T-cell (primary cell): ENCODE measurements at regions of chr2 and their contacts with region 1.

Region 1: DNA sequence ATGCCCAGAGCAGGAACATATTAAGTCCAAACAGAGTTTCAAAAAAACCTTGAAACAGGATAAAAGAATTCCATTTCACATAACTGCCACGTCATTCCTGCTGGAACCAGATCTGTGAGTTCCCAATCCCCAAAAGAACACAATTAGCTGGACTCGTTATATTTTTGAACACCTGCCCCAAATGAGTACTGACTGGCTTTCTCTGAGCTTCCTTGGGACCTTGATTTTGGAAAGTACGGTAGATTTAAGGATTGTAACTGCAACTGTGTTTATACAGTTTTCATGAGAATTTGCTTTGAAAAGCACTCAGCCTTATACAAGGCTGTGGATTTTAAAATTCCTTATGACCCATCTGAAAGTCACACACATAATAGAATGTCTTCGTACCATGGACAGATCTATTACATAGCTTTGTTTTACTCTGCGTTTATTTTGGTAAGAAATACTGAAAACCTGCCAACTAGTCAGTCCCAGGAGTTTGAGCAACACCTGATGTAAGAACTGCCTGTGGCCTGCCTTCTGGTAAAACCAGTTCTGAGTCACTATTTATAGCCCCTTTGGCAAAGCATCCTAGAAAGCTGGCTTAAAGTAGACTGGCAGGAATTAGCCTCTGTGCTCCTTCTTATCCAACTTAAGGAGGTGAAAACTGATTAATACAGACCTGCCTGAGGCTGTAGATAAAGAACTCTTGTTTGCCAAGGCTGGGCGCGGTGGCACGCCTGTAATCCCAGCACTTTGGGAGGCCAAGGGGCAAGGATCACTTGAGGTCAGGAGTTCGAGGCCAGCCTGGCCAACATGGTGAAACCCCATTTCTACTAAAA is 48.1 kb downstream of the MERTK start:
- DNase-seq: no peak
- ATAC-seq: no peak
- H3K4me3 ChIP-seq: no peak overlapping the region
- H3K4me3 Mint-ChIP-seq: no peak overlapping the region
- H3K27ac ChIP-seq: no peak overlapping the region
- H3K27ac Mint-ChIP-seq: no peak overlapping the region
- H3K4me1 ChIP-seq: no peaks in the 10 kb centered on the region
- H3K4me1 Mint-ChIP-seq: no peaks in the 10 kb centered on the region
- H3K27me3 ChIP-seq: peaks cover 0 to 11% of the 10 kb centered on the region in 2 experiments
- H3K27me3 Mint-ChIP-seq: peaks cover 0 to 11% of the 10 kb centered on the region in 2 donors

Region 2: DNA sequence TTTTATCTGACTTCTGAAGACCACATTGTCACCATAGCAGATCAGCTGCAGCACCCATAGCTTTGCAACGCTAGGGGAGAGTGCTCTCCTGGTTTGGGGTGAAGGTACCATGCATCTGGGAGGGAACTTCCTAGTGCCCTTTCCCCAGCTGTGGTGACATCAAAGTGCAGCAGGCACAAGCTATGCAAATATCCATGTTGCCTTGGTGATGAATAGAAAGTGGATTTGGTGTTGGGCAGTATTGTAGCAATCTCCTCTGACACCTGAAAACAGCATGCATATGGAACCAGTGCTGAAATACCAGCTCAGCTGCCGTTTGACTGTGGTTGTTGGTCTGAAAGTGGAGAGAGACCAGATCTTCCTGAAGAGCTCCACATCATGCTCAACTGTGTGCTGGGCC is 788.7 kb before region 1 on chr2:
- CTCF ChIA-PET with region 1: no interaction called
- POLR2A ChIA-PET with region 1: interaction called in 1 of 2 experiments, 11 read pairs
- DNase-seq: peak in 5 of 35 experiments; percentile 7 to 47 (median 22)
- ATAC-seq: peak in 1 of 4 experiments; percentile 46
- H3K4me3 ChIP-seq: peak overlapping the region in 1 of 2 donors; percentile 41
- H3K4me3 Mint-ChIP-seq: peak overlapping the region in 1 of 3 donors; percentile 46
- H3K27ac ChIP-seq: no peak overlapping the region
- H3K27ac Mint-ChIP-seq: no peak overlapping the region
- H3K4me1 ChIP-seq: peaks cover 20 to 52% of the 10 kb centered on the region in 2 experiments
- H3K4me1 Mint-ChIP-seq: peaks cover 52 to 57% (median 54%) of the 10 kb centered on the region in 3 donors
- H3K27me3 ChIP-seq: no peaks in the 10 kb centered on the region
- H3K27me3 Mint-ChIP-seq: no peaks in the 10 kb centered on the region

Region 3: DNA sequence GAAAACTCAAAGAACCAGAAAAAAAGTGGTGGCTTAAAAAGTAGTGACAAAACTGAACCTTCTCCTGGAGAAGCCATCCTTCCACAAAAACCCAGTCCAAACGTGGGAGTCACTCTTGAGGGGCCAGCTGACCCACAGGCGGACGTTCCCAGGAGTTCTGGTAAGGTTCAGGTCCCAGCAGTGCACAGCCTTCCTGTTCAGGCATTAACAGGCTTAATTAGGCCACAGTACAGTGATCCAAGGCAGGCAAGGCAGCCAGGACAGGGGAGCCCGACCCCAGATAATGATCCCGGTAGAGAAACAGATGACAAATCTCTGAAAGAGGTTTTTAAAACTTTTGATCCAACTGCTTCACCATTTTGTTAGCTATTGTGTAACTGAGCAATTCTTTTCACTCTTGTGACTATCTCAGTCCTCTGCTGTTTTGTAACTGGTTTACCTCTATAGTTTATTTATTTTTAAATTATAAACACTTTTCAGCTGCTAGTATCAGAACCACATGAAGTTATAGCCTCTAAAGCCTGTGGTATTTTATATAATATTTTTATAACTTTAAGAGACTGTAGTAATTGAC is 385.7 kb after region 1 on chr2:
- CTCF ChIA-PET with region 1: no interaction called
- POLR2A ChIA-PET with region 1: no interaction called
- DNase-seq: no peak
- ATAC-seq: no peak
- H3K4me3 ChIP-seq: no peak overlapping the region
- H3K4me3 Mint-ChIP-seq: no peak overlapping the region
- H3K27ac ChIP-seq: no peak overlapping the region
- H3K27ac Mint-ChIP-seq: no peak overlapping the region
- H3K4me1 ChIP-seq: no peaks in the 10 kb centered on the region
- H3K4me1 Mint-ChIP-seq: no peaks in the 10 kb centered on the region
- H3K27me3 ChIP-seq: no peaks in the 10 kb centered on the region
- H3K27me3 Mint-ChIP-seq: no peaks in the 10 kb centered on the region

Region 4: DNA sequence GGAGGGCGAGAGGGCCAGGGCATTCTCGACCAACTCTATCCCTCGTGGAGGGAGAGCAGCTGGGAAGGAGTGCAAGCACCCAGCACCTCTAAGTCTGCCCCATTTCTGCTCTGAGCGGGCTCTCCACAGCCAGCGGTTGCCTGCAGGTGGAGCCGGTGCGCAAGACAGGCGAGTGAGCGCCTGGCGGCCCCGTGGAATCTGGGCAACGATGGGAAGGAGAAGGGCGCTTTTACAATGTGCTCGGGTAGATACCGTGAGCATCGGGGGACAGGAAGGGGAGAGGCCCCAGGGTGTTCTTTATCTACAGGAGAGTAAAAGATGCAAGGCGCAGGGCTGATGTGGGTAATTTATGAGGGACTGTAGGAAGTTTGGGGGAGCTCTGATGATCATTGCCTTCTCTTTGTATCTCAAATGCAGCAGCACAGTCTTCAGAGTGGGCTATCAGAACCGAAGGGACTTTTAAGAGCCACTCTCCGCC is 534.6 kb after region 1 on chr2:
- CTCF ChIA-PET with region 1: no interaction called
- POLR2A ChIA-PET with region 1: no interaction called
- DNase-seq: peak; percentile 71 to 89 (median 79)
- ATAC-seq: peak; percentile 77 to 79 (median 78)
- H3K4me3 ChIP-seq: peak overlapping the region; percentile 57 to 68
- H3K4me3 Mint-ChIP-seq: peak overlapping the region; percentile 94 to 97 (median 97)
- H3K27ac ChIP-seq: peak overlapping the region; percentile 63
- H3K27ac Mint-ChIP-seq: peak overlapping the region; percentile 89 to 94
- H3K4me1 ChIP-seq: peaks cover 10 to 19% of the 10 kb centered on the region in 2 experiments
- H3K4me1 Mint-ChIP-seq: peaks cover 24 to 28% (median 24%) of the 10 kb centered on the region in 3 donors
- H3K27me3 ChIP-seq: no peaks in the 10 kb centered on the region
- H3K27me3 Mint-ChIP-seq: no peaks in the 10 kb centered on the region